ENCODE measurements at regions of chr19 and their contacts with region 1.

Region 1: DNA sequence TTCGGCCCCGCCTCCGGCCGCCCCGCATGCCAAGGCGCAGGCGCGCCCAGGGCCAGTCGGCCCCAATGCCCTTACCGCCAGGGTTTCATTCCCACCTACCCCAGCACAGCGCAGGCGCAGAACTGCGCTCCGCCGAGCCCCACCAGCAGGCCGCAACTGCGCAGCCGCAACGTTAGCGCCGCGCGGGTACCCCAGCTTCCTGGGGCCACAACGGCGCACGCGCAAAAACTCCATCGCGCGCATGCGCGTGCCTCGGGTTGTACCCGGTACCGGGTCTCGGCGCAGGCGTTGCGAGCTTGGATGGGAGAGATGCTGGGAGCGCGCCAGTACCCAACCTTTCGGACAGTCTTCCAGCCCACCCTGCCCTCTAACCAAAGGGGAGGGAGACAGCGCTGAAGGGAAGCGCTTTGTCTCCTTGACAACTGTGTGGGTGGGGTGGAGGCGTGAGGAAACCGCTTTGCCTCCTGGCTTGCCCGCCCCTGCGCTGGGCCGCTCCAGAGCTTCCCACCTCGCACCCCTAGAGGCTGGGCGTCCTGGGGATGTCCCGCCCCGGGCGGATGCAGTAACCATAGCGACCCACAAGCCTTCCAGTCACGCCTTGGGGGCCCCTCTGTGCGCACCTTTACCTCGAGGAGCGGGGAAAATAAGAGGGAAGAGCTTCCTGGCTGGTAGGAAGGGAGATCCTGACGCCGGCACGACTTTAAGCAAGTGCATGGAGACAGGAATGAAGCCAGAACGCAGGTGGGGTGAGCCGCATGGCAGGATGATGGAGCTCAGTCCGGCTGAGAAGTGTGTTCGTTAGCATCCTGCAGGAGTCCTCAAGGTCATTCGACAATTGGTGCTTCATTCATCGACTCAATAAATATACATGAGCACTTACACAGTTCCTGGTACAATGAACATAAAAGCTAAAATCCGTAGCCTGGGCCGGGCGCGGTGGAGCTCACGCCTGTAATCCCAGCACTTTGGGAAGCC is 525 bp upstream of the MYPOP start:
- DNase-seq: peak; percentile 97
- ATAC-seq: peak; percentile 91
- H3K4me3 ChIP-seq: peak overlapping the region; percentile 85
- H3K27ac ChIP-seq: no peak overlapping the region
- H3K4me1 ChIP-seq: peaks cover 11% of the 10 kb centered on the region
- H3K27me3 ChIP-seq: no peaks in the 10 kb centered on the region
- CTCF ChIP-seq: no peak

Region 2: DNA sequence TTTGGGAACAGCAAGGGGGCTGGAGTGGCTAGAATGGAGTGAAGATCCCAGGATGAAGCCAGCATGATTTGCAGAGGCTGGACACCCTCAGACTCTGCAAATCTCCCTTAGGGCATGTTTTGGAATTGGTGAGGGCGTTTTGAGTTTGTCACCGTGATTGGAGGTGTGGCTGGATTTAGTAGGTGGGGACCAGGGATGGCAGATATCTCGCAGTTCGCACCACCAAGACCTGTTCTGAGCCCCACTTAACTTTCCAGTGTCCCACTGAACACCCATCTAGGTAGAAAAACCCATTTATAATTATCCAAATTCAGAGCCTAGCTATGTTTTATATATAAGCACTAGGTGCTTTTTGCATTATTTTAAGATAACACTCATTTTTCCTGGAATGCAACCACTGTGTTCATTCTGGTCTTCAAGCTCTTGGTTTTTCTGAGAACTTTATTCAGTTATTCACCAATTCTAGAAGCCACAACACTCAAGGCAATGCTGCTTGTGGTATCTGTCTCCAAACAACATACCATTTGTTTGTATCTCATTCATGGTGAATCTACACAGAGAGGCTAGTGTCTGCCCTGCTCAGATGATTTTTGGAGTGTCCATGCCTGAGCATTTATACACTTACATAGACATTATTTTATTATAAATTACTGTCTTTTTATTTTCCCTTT is 14.6 kb after region 1 on chr19:
- CTCF ChIA-PET with region 1: no interaction called
- POLR2A ChIA-PET with region 1: no interaction called
- intact Hi-C with region 1: no loop called
- DNase-seq: no peak
- ATAC-seq: no peak
- H3K4me3 ChIP-seq: no peak overlapping the region
- H3K27ac ChIP-seq: no peak overlapping the region
- H3K4me1 ChIP-seq: no peaks in the 10 kb centered on the region
- H3K27me3 ChIP-seq: no peaks in the 10 kb centered on the region
- CTCF ChIP-seq: no peak

Region 3: DNA sequence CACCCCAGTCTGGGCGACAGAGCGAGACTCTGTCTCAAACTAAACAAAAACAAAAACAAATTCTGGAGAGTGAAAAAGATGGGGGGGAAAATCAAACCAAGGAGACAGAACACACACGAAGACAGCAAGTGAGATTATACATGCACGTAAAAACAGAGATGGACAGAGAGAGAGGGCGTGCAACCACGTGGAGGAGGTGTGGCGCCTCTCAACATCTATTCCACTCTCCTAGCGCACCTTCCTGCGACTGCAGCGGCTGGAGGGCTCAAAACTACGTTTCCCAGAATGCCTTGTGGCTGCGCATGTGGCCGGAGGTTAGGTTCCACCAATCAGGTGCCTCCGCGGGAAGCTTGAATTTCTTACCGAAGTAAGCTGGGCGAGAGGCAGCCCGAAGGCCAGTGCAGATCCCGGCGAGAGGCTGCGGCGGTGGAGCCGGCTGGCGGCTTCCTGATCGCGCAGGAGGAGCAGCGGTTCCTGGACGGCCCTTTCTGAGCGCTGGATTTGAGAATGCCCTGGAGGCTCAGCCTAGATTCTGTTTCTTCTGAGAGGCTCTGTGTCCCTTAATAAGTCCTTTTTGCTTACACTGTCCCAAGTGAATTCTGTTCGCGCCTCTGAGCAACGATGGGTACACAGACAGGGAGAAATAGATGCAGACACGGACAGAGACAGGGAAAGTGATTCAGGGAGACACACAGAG is 24.8 kb after region 1 on chr19:
- CTCF ChIA-PET with region 1: no interaction called
- POLR2A ChIA-PET with region 1: no interaction called
- intact Hi-C with region 1: loop called (anchors 2 kb)
- DNase-seq: peak; percentile 95
- ATAC-seq: peak; percentile 99
- H3K4me3 ChIP-seq: peak overlapping the region; percentile 61
- H3K27ac ChIP-seq: no peak overlapping the region
- H3K4me1 ChIP-seq: peaks cover 5% of the 10 kb centered on the region
- H3K27me3 ChIP-seq: no peaks in the 10 kb centered on the region
- CTCF ChIP-seq: peak; percentile 28; the same call in 1 of the 2 replicates

Region 4: GRCh38 chr19:45994989-45995714 is 92.2 kb after region 1 on chr19 and contains the start of gene CCDC61:
- CTCF ChIA-PET with region 1: no interaction called
- POLR2A ChIA-PET with region 1: interaction called, 12 read pairs
- intact Hi-C with region 1: no loop called
- DNase-seq: peak; percentile 99
- ATAC-seq: peak; percentile 97
- H3K4me3 ChIP-seq: peak within 1 kb of the TSS; percentile 95
- H3K27ac ChIP-seq: no peak within 1 kb of the TSS
- H3K4me1 ChIP-seq: no peaks in the 10 kb centered on the region; the same call in 1 of the 2 replicates
- H3K27me3 ChIP-seq: no peaks in the 10 kb centered on the region
- CTCF ChIP-seq: no peak
- total RNA-seq, gene CCDC61: 6.3 and 7.7 TPM in 2 replicates

Region 5: GRCh38 chr19:46239193-46240024 is 336.5 kb after region 1 on chr19:
- CTCF ChIA-PET with region 1: no interaction called
- POLR2A ChIA-PET with region 1: interaction called, 10 read pairs
- intact Hi-C with region 1: no loop called
- DNase-seq: no peak
- ATAC-seq: no peak
- H3K4me3 ChIP-seq: no peak overlapping the region
- H3K27ac ChIP-seq: no peak overlapping the region
- H3K4me1 ChIP-seq: no peaks in the 10 kb centered on the region
- H3K27me3 ChIP-seq: peaks cover 41% of the 10 kb centered on the region
- CTCF ChIP-seq: no peak

Region 6: DNA sequence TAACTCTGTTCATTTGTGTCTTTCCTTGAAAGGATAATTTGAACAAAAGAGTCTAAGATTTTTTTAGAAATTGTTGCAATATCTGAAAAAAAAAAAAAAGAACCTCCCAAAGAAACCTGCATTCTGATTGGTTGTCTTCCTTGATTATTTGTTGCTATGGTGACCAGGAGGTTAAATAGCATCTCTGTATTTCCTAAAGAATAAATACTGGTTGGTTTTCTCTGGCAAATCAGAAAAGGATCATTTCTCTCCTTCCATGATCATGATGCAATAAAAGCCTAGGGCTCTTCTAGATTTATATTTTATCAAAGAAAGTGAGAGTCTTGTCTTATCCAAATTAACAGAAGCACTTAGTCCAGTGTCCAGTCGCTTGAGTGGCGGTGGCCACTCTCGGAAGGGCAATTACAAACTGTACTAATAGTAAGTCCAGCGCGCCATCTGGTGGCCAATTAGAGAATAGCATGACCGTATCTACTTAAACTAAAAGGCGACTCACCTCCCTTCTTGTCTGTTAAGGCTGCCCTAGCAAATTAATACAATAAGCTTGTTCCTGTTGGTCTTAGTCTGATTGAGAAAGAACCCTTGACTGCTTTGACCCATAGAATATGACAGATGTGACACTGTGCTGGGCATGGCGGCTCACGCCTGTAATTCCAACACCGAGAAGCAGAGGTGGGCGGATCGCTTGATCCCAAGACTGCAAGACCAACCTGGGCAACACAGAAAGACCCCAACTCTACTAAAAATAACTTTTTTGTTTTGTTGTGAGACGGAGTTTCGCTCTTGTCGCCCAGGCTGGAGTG is 639.7 kb after region 1 on chr19:
- CTCF ChIA-PET with region 1: no interaction called
- POLR2A ChIA-PET with region 1: interaction called, 19 read pairs
- intact Hi-C with region 1: no loop called
- DNase-seq: peak; percentile 89
- ATAC-seq: peak; percentile 79
- H3K4me3 ChIP-seq: no peak overlapping the region
- H3K27ac ChIP-seq: no peak overlapping the region
- H3K4me1 ChIP-seq: no peaks in the 10 kb centered on the region
- H3K27me3 ChIP-seq: no peaks in the 10 kb centered on the region
- CTCF ChIP-seq: peak; percentile 89